WTC11 (cell line): ENCODE measurements at regions of chr17 and their contacts with region 1.

Region 1: DNA sequence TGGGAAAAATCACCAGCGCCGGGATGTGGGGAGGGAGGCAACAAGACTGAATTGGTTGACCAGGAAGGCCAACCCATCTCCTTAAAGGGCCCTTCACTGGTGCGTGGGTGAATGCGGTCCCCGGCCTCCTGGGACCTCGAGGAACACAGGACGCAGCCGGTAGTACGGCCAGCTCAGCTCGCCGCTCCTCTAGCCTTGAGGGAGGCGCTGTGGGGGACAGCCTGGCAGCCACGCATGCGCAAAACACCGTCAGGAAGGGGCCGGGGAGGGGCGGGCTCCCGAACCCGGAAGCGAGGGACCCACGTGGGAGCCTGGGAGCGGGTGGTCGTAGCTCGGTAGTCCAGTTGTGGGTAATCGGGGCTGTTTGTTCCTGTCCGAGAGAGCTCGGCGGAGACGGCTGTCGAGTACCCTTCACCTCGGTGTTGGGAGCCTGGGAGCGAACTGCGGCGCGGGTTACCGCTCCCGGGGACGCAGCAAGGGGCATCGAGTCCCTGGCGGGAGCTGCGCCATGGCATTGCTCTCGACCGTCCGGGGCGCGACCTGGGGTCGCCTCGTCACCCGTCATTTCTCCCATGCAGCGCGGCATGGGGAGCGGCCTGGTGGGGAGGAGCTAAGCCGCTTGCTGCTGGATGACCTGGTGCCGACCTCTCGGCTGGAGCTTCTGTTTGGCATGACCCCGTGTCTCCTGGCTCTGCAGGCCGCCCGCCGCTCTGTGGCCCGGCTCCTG is at the start of gene MRM1:
- DNase-seq: peak; percentile 93
- ATAC-seq: peak; percentile 83
- H3K4me3 Mint-ChIP-seq: peak within 1 kb of the TSS; percentile 84
- H3K27ac Mint-ChIP-seq: peak within 1 kb of the TSS; percentile 90
- H3K4me1 Mint-ChIP-seq: peaks cover 27% of the 10 kb centered on the region
- H3K27me3 Mint-ChIP-seq: no peaks in the 10 kb centered on the region
- CTCF ChIP-seq: no peak
- total RNA-seq, gene MRM1: 12.1 to 16.5 TPM (median 14.2 TPM) in 3 replicates

Region 2: DNA sequence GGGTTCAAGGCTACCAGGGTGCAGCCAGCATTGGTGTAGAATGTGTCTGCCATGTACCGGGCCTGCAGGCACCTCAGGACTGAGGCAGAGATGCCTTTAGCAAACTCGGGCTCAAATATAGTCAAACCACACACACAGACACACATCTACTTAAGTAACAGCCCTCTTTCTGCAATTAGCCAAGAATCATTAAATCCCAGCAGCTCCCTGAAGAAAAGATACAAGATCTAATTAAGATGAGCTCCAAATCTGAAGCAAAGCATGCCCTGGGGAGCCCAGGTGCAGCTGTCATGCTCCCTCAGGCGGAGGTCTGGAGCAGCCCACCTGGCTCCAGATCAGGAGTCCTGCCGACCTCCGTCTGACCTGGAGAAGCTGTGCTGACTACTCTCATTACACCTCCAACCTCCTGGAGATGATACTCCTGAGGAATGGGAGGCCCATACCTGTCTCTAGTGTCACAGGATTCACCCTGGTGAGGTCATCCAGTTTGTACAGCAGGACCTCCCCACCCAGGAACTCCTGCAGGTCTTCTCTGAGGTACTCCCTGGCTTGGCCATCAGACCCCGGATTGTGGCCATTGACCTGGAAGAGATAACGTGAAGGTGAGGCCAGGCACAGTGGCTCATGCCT is 73.7 kb before region 1 on chr17:
- CTCF ChIA-PET with region 1: no interaction called
- POLR2A ChIA-PET with region 1: no interaction called
- DNase-seq: no peak
- ATAC-seq: no peak
- H3K4me3 Mint-ChIP-seq: no peak overlapping the region
- H3K27ac Mint-ChIP-seq: no peak overlapping the region
- H3K4me1 Mint-ChIP-seq: 0 out of 2 replicates have a peak, but pooled peaks cover 3% of the 10 kb centered on the region
- H3K27me3 Mint-ChIP-seq: no peaks in the 10 kb centered on the region
- CTCF ChIP-seq: no peak

Region 3: GRCh38 chr17:36550491-36551417 is 50.7 kb before region 1 on chr17:
- CTCF ChIA-PET with region 1: interaction called, 5 read pairs
- POLR2A ChIA-PET with region 1: interaction called, 12 read pairs
- DNase-seq: no peak
- ATAC-seq: no peak
- H3K4me3 Mint-ChIP-seq: no peak overlapping the region
- H3K27ac Mint-ChIP-seq: peak overlapping the region; percentile 92
- H3K4me1 Mint-ChIP-seq: peaks cover 19% of the 10 kb centered on the region
- H3K27me3 Mint-ChIP-seq: no peaks in the 10 kb centered on the region
- CTCF ChIP-seq: no peak

Region 4: DNA sequence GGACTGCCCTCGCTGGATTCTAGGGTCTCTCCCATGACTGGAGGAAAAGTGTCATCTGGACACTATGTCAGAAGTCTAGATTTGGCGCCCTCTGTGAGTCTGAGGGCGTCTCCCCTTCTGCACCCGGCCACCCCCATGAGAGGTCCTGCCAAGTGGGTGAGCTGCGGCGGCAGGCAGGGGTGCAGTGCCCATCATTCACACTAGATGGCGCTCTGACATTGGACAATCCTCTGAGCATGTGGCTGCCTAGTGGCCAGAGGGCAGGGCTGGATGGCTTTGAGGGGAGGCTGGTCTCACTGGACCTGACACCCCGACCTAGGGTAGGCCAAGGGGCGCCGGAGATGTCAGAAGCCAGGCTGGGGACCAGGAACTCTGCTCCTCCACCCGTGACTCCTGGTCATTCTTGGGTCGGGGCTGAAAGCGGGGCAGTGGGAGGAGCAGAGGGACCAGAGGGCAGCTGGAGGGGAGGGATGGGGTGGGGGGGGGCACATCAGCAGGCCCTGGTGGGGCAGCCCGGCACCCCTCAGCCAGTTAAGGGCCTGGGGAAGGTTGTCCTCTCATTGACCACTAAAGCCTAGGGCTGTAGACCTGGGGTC is 27.9 kb after region 1 on chr17:
- CTCF ChIA-PET with region 1: interaction called, 37 read pairs
- POLR2A ChIA-PET with region 1: no interaction called
- DNase-seq: peak; percentile 90
- ATAC-seq: peak; percentile 70
- H3K4me3 Mint-ChIP-seq: no peak overlapping the region
- H3K27ac Mint-ChIP-seq: no peak overlapping the region
- H3K4me1 Mint-ChIP-seq: peaks cover 35% of the 10 kb centered on the region
- H3K27me3 Mint-ChIP-seq: peaks cover 18% of the 10 kb centered on the region
- CTCF ChIP-seq: peak; percentile 100

Region 5: GRCh38 chr17:36705874-36706731 is 104.6 kb after region 1 on chr17:
- CTCF ChIA-PET with region 1: interaction called, 24 read pairs
- POLR2A ChIA-PET with region 1: no interaction called
- DNase-seq: peak; percentile 70
- ATAC-seq: peak; percentile 80
- H3K4me3 Mint-ChIP-seq: no peak overlapping the region
- H3K27ac Mint-ChIP-seq: no peak overlapping the region
- H3K4me1 Mint-ChIP-seq: 0 out of 2 replicates have a peak, but pooled peaks cover 3% of the 10 kb centered on the region
- H3K27me3 Mint-ChIP-seq: peaks cover 44% of the 10 kb centered on the region
- CTCF ChIP-seq: peak; percentile 70

Region 6: DNA sequence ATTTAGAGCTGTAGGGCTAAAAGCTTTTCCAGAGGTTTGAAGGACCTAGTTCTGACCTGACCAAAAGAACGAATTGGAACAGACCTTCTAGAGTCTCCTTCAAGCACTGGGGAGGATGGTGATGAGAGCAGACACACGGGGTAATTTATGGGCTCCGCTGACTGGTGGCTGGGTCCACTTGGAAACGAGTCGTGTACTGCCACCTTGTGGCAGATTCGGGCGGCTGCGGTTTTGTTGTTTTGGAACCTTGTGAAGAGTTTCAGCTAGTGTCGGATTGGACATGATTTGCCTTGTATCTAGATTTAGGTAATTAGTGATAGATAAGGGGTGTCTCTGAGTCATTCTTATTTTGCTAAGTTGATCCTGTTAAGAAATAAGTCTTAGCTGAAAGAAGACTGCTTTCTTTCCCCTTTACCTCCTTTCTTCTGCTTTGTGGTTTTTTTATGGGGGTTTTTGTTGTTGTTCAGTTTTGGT is 446.2 kb after region 1 on chr17:
- CTCF ChIA-PET with region 1: interaction called, 19 read pairs
- POLR2A ChIA-PET with region 1: no interaction called
- DNase-seq: peak; percentile 92
- ATAC-seq: peak; percentile 85
- H3K4me3 Mint-ChIP-seq: no peak overlapping the region
- H3K27ac Mint-ChIP-seq: peak overlapping the region; percentile 82
- H3K4me1 Mint-ChIP-seq: peaks cover 57% of the 10 kb centered on the region
- H3K27me3 Mint-ChIP-seq: no peaks in the 10 kb centered on the region
- CTCF ChIP-seq: peak; percentile 85

Region 7: DNA sequence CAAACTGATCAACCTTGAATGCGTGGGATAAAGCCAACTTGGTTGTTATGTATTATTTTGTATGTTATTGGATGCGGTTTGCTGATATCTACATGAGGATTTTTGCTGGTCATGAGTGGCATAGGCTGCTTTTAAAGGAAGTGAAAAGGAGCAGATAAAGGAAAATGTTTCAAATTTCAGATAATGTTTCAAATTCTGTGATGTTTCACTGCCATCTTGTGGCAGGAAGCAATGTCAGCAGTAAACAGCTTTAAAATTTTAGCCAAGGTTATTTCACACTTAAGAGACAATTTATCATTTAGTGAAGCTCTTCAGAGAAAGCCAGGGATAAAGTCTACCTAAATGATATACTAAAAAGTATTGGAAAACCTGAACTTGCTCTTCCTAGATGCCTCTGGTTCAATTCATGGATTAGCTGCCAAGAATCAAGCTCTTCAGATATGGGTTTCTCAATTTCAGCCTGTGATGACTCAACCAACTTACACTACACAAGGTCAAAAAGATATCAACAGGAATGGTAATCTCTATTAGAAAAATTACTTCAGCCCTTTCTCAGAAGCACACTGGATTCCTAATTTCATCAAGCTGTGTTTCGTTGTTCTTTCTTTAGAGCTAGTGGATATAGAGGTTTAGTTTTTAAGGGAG is 638.3 kb after region 1 on chr17:
- CTCF ChIA-PET with region 1: interaction called, 15 read pairs
- POLR2A ChIA-PET with region 1: no interaction called
- DNase-seq: no peak
- ATAC-seq: no peak
- H3K4me3 Mint-ChIP-seq: no peak overlapping the region
- H3K27ac Mint-ChIP-seq: no peak overlapping the region
- H3K4me1 Mint-ChIP-seq: no peaks in the 10 kb centered on the region
- H3K27me3 Mint-ChIP-seq: no peaks in the 10 kb centered on the region
- CTCF ChIP-seq: no peak